ENCODE measurements at regions of chr1 and their contacts with region 1.

Region 1: GRCh38 chr1:39408641-39409054 is 82.8 kb upstream of the BMP8A start:
- H3K4me3 ChIP-seq: peak overlapping the region; percentile 83
- H3K27ac ChIP-seq: peak overlapping the region; percentile 75
- H3K4me1 ChIP-seq: peaks cover 9% of the 10 kb centered on the region
- CTCF ChIP-seq: no peak

Region 2: GRCh38 chr1:39268112-39268581 is 140.5 kb before region 1 on chr1:
- CTCF ChIA-PET with region 1: interaction called, 22 read pairs
- POLR2A ChIA-PET with region 1: interaction called, 3 read pairs
- H3K4me3 ChIP-seq: peak overlapping the region; percentile 41
- H3K27ac ChIP-seq: peak overlapping the region; percentile 52
- H3K4me1 ChIP-seq: peaks cover 16% of the 10 kb centered on the region
- CTCF ChIP-seq: no peak

Region 3: DNA sequence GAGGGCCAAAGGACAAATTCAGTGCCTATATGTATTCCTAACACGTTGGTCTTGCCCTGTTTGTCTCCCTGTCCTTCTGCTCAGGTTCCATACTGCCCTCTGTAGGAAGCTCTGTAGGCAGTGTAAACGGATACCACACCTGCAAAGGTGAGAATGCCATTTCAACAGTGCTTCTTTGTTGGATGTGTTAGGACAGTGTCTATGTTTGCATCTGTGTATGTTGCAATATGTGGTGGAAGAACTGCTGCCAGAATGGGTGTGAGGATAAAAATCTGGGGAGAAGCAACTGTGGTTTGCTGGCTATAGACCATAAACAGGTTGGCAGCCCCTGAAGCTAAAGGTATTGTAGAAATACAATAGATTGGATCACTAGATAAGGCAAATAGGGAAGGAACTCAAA is 30.3 kb before region 1 on chr1:
- CTCF ChIA-PET with region 1: interaction called, 14 read pairs
- POLR2A ChIA-PET with region 1: no interaction called
- H3K4me3 ChIP-seq: no peak overlapping the region
- H3K27ac ChIP-seq: no peak overlapping the region
- H3K4me1 ChIP-seq: no peaks in the 10 kb centered on the region
- CTCF ChIP-seq: peak; percentile 37; the same call in 1 of the 2 replicates

Region 4: DNA sequence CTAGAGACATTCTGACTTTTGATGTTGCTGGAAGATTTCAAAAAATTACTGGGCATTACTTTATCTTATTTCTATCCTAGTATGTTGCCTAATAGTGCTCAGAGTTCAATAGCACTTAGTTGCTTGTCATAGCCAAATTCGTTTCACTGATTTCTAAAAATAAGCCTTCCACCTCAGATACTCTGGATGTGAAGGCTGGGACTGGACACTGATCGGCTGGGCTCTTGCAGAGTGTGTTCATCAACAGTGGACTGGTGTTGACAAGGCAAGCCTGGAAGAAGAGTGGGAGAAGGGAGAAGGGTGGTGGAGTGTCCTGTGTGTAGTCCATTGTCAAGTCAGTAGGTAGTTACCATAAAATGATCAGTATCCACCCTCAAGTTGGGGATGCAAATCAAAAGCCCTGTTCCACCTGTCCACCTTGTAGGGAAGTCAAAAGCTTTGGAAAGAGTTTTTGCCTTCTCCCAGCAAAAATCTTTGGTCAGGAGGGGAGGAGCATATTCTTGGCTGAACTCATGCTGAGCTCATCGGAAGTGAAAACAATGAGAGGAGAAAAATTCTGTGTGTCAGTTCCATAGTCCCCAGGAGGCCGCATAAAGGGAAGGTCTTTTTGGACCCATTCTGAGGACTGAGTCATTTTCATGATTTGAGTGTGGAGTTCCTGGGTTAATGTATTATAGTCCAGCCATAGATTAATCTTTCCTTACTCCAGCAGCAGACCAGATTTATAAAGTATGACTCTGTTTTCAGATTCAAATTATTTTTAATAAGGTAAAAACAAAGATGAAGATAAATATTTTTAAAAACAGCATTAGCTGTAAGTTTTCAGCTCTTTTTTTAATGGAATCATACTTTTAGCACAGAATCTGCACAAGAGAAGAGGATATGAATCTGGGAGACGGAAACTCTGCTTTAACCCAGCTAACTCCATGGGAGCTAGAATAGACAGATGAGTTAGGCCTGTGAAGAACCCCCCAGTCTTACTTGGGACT is 16.7 kb before region 1 on chr1:
- CTCF ChIA-PET with region 1: interaction called, 28 read pairs
- POLR2A ChIA-PET with region 1: interaction called, 10 read pairs
- H3K4me3 ChIP-seq: no peak overlapping the region
- H3K27ac ChIP-seq: no peak overlapping the region
- H3K4me1 ChIP-seq: peaks cover 6% of the 10 kb centered on the region; the same call in 1 of the 2 replicates
- CTCF ChIP-seq: no peak

Region 5: GRCh38 chr1:39398278-39399021 is 10.2 kb before region 1 on chr1:
- CTCF ChIA-PET with region 1: interaction called, 27 read pairs
- POLR2A ChIA-PET with region 1: interaction called, 10 read pairs
- H3K4me3 ChIP-seq: no peak overlapping the region
- H3K27ac ChIP-seq: no peak overlapping the region
- H3K4me1 ChIP-seq: peaks cover 9% of the 10 kb centered on the region; the same call in 1 of the 2 replicates
- CTCF ChIP-seq: no peak

Region 6: DNA sequence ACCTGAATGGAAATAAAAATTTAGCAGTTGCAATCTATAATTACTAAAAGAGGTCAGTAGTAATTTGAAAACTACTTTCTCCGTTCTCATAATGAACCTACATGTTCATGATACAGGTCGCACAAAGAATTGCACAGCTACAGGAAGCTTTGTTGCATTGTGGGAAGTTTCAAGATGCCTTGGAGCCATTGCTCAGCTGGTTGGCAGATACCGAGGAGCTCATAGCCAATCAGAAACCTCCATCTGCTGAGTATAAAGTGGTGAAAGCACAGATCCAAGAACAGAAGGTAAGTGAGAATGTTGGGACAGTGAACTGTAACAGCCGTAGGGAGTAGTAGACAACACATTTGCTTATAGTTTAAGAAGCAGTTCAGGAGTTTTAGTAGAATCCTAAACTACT is 14.0 kb after region 1 on chr1:
- CTCF ChIA-PET with region 1: interaction called, 21 read pairs
- POLR2A ChIA-PET with region 1: no interaction called
- H3K4me3 ChIP-seq: no peak overlapping the region
- H3K27ac ChIP-seq: no peak overlapping the region
- H3K4me1 ChIP-seq: no peaks in the 10 kb centered on the region
- CTCF ChIP-seq: no peak

Region 7: DNA sequence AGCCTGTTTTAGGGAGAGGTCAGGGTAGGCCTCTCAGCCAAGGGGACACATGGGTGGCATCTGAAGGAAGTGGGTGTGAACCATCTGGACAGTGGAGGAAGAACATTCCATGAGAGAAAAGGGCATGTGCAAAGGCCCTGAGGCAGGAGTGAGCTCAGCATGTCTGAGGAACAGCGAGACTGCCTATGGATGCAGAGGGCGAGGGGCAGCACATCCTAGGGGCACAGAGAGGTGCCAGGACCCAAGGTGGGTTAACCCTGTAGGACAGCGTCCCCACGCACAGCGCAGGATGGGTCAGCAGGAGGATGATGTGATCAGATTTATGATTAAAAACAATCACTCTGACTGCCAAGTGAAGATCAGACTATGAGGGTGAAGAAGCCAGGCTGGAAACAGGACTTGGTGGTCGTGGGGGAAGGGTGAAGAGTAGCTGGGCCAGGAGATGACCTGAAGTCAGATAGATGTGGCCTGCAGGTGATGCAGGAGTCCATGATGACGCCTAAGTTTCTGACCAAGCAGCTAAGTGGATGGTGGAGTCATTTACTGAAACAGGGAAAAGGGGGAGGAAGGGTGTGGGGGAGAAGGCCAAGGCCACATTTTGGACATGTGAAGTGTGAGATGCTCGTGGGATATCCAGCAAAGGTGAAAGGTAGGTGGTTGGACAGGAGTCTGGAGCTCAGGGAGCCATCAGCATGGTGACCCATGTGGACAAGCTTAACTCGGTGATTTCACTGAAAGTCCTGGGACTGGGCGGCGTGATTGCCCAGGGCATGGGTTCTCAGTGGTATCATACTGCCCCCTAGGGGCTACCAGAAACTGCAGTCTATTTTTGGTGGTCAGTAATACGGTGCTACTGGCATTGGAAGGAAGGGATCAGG is 130.2 kb after region 1 on chr1:
- CTCF ChIA-PET with region 1: interaction called, 10 read pairs
- POLR2A ChIA-PET with region 1: no interaction called
- H3K4me3 ChIP-seq: no peak overlapping the region
- H3K27ac ChIP-seq: no peak overlapping the region
- H3K4me1 ChIP-seq: no peaks in the 10 kb centered on the region
- CTCF ChIP-seq: peak; percentile 80; the same call in 1 of the 2 replicates